ENCODE measurements at regions of chr14 and their contacts with region 1.

Region 1: DNA sequence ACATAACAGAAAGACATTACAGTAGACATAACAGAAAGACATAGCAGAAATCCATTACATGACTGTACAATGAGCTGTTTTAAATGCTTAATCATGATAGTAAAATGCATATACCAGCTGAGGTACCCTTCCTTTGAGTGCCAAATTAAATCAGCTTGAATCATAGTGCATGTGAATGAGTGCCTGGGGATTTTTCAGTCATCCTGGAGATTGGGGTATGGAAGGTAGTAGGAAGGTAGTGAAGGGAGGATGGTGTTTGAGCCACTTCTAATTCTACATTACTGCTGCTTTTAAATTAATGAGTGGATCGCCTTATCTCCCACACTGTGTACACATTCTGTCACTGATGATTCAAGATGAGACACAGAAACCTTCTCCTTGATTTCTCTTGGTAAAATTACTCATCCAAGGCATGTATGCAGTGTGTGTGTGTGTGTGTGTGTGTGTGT is 534.2 kb downstream of the LRFN5 start:
- DNase-seq: peak; percentile 90
- ATAC-seq: peak; percentile 93
- H3K4me3 ChIP-seq: peak overlapping the region; percentile 1; the same call in 1 of the 2 replicates
- H3K27ac ChIP-seq: peak overlapping the region; percentile 89
- H3K4me1 ChIP-seq: peaks cover 28% of the 10 kb centered on the region
- H3K27me3 ChIP-seq: no peaks in the 10 kb centered on the region
- CTCF ChIP-seq: no peak

Region 2: DNA sequence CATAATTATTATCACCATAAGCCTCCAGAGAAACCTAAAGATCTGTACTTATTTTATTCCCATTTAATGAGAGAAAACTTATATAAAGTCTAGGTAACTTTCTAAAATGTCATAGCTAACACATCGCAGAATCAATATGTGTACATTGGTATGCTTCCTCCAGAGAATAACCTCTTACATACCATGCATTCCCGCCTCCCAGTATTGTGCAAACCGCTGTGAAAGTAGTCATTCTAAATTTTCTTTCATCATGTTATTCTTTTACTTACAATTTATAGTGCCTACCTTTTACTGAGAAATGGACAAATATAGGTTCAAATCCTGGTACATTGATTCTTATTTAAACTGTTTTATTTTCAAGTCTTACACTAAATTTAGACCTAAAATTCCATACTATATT is 70.8 kb before region 1 on chr14:
- CTCF ChIA-PET with region 1: no interaction called
- POLR2A ChIA-PET with region 1: no interaction called
- intact Hi-C with region 1: no loop called
- DNase-seq: no peak
- ATAC-seq: no peak
- H3K4me3 ChIP-seq: no peak overlapping the region
- H3K27ac ChIP-seq: no peak overlapping the region
- H3K4me1 ChIP-seq: no peaks in the 10 kb centered on the region
- H3K27me3 ChIP-seq: no peaks in the 10 kb centered on the region
- CTCF ChIP-seq: no peak

Region 3: GRCh38 chr14:42214981-42215491 is 74.2 kb after region 1 on chr14:
- CTCF ChIA-PET with region 1: no interaction called
- POLR2A ChIA-PET with region 1: no interaction called
- intact Hi-C with region 1: loop called (anchors 1 kb)
- DNase-seq: peak; percentile 94
- ATAC-seq: peak; percentile 95
- H3K4me3 ChIP-seq: peak overlapping the region; percentile 4; the same call in 1 of the 2 replicates
- H3K27ac ChIP-seq: peak overlapping the region; percentile 90
- H3K4me1 ChIP-seq: peaks cover 29% of the 10 kb centered on the region
- H3K27me3 ChIP-seq: no peaks in the 10 kb centered on the region
- CTCF ChIP-seq: no peak